ENCODE measurements at regions of chr5 and their contacts with region 1.

Region 1: GRCh38 chr5:62689599-62690368 is 111.2 kb downstream of the LRRC70 start:
- DNase-seq: no peak
- ATAC-seq: peak in 3 of 8 donors; percentile 7 to 59 (median 31)
- H3K4me3 ChIP-seq: peak overlapping the region in 6 of 10 donors; percentile 0 to 41 (median 26)
- H3K27ac ChIP-seq: peak overlapping the region in 4 of 10 donors; percentile 41 to 77 (median 58)
- H3K4me1 ChIP-seq: peaks cover 0 to 33% (median 13%) of the 10 kb centered on the region in 9 donors
- H3K27me3 ChIP-seq: no peaks in the 10 kb centered on the region
- CTCF ChIP-seq: no peak

Region 2: GRCh38 chr5:62653016-62653863 is 36.5 kb before region 1 on chr5:
- intact Hi-C with region 1: loop called in 1 of 10 experiments (anchors 1 kb)
- DNase-seq: no peak
- ATAC-seq: peak in 6 of 8 donors; percentile 39 to 83 (median 55)
- H3K4me3 ChIP-seq: no peak overlapping the region
- H3K27ac ChIP-seq: peak overlapping the region in 3 of 10 donors; percentile 26 to 36 (median 28)
- H3K4me1 ChIP-seq: peaks cover 0 to 12% (median 0%) of the 10 kb centered on the region in 9 donors
- H3K27me3 ChIP-seq: no peaks in the 10 kb centered on the region
- CTCF ChIP-seq: no peak

Measured in heart right ventricle (tissue), 16 donors.